Tibial artery (tissue), 4 donors: ENCODE measurements at regions of chr11 and their contacts with region 1.

Region 1: GRCh38 chr11:13276832-13277767 is 490 bp upstream of the BMAL1 start:
- DNase-seq: peak; percentile 97 to 99
- H3K4me3 ChIP-seq: peak overlapping the region; percentile 90 to 100
- H3K27ac ChIP-seq: peak overlapping the region; percentile 89 to 96
- H3K4me1 ChIP-seq: peaks cover 0 to 36% (median 16%) of the 10 kb centered on the region in 4 donors
- H3K27me3 ChIP-seq: no peaks in the 10 kb centered on the region
- CTCF ChIP-seq: peak in 1 of 2 experiments; percentile 57

Region 2: GRCh38 chr11:13210424-13210823 is 66.7 kb before region 1 on chr11:
- intact Hi-C with region 1: loop called (anchors 10 kb)
- DNase-seq: peak; percentile 62 to 73
- H3K4me3 ChIP-seq: no peak overlapping the region
- H3K27ac ChIP-seq: no peak overlapping the region
- H3K4me1 ChIP-seq: peaks cover 0 to 5% (median 0%) of the 10 kb centered on the region in 4 donors
- H3K27me3 ChIP-seq: no peaks in the 10 kb centered on the region
- CTCF ChIP-seq: peak; percentile 60 to 78

Region 3: DNA sequence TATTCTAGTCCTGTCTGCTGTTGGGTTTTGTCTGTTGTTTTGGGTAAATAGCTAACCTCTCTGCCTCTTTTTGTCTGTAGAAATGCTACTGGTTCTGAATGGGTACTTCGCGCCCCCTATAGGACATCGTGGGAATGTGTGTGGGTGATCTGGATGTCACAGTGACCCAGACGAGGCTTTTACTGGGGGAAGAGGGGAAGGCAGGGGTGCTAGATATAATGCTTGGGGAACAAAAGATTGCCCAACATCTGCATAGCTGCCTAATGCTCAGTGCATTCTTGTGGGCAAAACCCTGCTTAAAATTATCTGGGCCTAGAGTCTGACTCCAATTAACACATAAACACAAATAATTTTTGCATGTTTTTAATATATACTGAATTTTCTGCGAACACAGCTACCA is 58.2 kb after region 1 on chr11:
- intact Hi-C with region 1: loop called (anchors 5 kb)
- DNase-seq: peak; percentile 72 to 77
- H3K4me3 ChIP-seq: no peak overlapping the region
- H3K27ac ChIP-seq: no peak overlapping the region
- H3K4me1 ChIP-seq: peaks cover 0 to 57% (median 40%) of the 10 kb centered on the region in 4 donors
- H3K27me3 ChIP-seq: no peaks in the 10 kb centered on the region
- CTCF ChIP-seq: peak; percentile 65 to 66

Region 4: GRCh38 chr11:13462901-13463778 is 186.0 kb after region 1 on chr11 and contains the start of gene BTBD10:
- intact Hi-C with region 1: loop called (anchors 5 kb)
- DNase-seq: peak; percentile 90 to 97
- H3K4me3 ChIP-seq: peak within 1 kb of the TSS; percentile 82 to 87
- H3K27ac ChIP-seq: peak within 1 kb of the TSS; percentile 83 to 91
- H3K4me1 ChIP-seq: peaks cover 0 to 21% (median 15%) of the 10 kb centered on the region in 4 donors
- H3K27me3 ChIP-seq: no peaks in the 10 kb centered on the region
- CTCF ChIP-seq: no peak